Gastrocnemius medialis (tissue), 4 donors: ENCODE measurements at regions of chr16 and their contacts with region 1.

Region 1: DNA sequence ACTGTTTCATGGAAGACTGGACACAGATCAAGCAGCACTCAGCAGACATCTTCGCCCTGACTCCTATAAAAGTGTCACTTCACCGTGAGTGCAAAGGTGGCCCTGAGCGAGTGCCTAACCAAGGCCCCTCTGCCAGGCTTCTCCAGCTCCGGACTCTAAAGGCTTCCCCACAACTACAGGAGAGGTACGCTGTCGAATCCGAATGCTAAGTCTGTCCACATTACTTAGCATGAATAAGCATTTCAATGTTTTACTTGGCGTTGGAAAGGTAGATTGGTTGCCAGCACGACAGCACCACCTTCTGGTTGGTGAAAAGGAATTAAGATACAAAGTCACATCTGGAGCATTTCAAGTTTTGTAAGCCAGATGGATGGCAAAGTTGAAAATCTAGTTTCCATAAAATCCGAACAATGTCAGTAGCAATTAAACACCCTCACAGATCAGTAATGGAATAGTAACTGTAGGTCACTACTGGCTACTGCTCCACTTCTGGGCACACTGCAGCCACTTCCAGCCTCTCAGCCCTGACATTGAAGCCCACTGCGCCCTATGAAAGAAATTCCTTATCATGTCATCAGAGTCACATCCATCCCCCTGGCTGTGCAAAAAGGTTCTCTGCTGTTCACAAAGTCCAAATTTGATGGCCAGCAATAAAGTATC is 100.9 kb downstream of the PARN start:
- DNase-seq: peak; percentile 72 to 83
- ATAC-seq: peak; percentile 90 to 91
- H3K4me3 ChIP-seq: peak overlapping the region; percentile 26 to 49 (median 40)
- H3K27ac ChIP-seq: peak overlapping the region; percentile 82 to 92 (median 86)
- H3K4me1 ChIP-seq: peaks cover 23 to 44% of the 10 kb centered on the region in 2 donors
- H3K27me3 ChIP-seq: no peaks in the 10 kb centered on the region
- CTCF ChIP-seq: peak; percentile 74 to 88 (median 80)
- POLR2A ChIP-seq: peak; percentile 52 to 70

Region 2: GRCh38 chr16:13935408-13935807 is 593.7 kb before region 1 on chr16:
- in situ Hi-C with region 1: loop called in 3 of 4 experiments (anchors 25 kb)
- intact Hi-C with region 1: no loop called
- DNase-seq: no peak
- ATAC-seq: no peak
- H3K4me3 ChIP-seq: no peak overlapping the region
- H3K27ac ChIP-seq: no peak overlapping the region
- H3K4me1 ChIP-seq: peaks cover 34 to 40% of the 10 kb centered on the region in 2 donors
- H3K27me3 ChIP-seq: no peaks in the 10 kb centered on the region
- CTCF ChIP-seq: peak in 3 of 5 experiments; percentile 7 to 42 (median 15)
- POLR2A ChIP-seq: no peak

Region 3: DNA sequence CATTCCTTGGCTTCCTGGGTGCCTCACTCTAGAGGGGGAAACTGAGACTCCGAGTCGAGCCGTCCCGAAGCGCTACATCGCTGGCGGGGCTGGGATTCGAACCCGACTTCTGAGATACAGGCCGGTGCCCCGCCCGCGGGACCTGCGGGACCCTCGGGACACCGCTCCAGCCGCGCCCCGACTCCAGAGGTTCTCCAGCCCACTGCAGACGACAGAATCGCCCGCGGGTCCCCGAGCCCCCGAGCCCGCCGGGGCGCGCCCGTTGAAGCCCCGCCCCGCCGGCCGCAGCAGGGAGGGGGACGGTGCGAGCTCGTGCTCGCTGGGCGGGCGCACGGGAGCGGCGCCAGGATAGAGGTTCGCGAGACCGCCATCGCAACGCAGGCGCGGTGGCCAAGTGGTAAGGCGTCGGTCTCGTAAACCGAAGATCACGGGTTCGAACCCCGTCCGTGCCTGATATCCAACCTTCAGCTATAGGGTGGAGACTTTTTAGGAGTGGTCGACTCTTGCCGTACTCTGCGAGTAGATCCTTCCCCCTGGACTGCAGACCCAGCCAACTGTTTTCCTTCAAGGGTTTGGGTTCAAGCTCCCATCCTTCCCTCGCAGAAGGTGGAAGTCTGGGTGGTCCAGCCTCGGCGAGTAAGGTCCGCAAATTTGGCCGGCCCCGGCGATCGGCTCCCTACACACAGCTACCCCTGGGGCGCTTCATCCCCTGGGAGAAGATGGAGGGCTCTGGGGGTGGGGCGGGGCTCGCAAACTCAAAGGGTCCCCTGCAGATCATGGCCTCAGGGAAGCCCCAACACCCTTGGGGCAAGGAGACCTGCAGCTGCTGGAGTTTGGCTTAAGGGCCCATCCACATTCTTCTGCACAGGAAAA is 243.4 kb before region 1 on chr16:
- in situ Hi-C with region 1: loop called in 2 of 4 experiments (anchors 10 kb)
- intact Hi-C with region 1: no loop called
- DNase-seq: peak; percentile 74 to 87
- ATAC-seq: peak; percentile 80 to 82
- H3K4me3 ChIP-seq: peak overlapping the region; percentile 65 to 91 (median 83)
- H3K27ac ChIP-seq: peak overlapping the region; percentile 84 to 96 (median 94)
- H3K4me1 ChIP-seq: peaks cover 4 to 6% of the 10 kb centered on the region in 2 donors
- H3K27me3 ChIP-seq: no peaks in the 10 kb centered on the region
- CTCF ChIP-seq: no peak
- POLR2A ChIP-seq: peak; percentile 69 to 83

Region 4: DNA sequence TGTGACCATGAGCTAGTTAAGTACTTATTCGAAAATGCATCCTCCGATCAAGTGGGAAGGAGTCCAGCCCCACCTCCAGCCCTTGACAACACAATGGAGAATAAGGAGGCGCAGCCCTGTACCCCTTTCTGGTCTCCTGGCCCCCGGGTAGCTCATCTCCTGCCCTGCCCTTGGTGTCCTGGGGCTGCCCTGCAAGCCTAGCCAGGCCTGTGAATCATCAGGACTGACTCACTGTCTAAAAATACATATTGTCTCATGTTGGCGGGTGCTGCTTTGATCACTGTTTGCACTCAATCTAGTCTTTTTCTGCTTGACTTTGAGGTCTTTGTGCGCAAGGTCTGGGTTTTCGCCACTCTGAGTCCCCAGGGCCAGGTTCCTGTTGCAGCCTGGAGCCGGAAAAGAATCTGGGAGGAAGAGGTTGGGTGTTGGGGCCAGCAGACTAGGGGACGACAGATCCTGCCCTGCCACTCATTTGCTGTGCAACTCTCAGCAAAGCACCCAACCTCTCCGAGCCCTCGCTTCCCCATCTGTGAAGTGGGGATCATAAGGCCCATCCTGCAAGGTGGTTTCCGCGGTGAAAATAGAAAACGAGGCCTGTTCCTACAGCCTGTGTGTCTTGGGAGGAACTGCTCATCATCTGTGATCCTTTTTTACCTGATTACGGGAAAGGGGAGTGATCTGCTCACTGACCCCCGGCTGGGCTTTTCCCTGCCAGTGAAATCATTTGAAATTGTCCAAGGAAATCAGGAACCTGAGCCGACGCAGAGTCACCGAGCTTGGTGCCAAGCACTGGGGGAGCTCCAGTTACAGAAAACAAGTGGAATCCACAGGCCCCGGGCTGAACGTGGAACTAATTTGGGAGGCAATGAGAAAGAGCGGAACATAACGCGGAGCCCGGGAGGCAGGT is 129.5 kb before region 1 on chr16:
- in situ Hi-C with region 1: no loop called
- intact Hi-C with region 1: loop called (anchors 2 kb)
- DNase-seq: peak; percentile 83 to 89
- ATAC-seq: peak; percentile 87 to 88
- H3K4me3 ChIP-seq: peak overlapping the region; percentile 17 to 32 (median 22)
- H3K27ac ChIP-seq: peak overlapping the region; percentile 91 to 96 (median 94)
- H3K4me1 ChIP-seq: peaks cover 21 to 25% of the 10 kb centered on the region in 2 donors
- H3K27me3 ChIP-seq: no peaks in the 10 kb centered on the region
- CTCF ChIP-seq: no peak
- POLR2A ChIP-seq: no peak

Region 5: GRCh38 chr16:14486520-14487303 is 42.4 kb before region 1 on chr16:
- in situ Hi-C with region 1: no loop called
- intact Hi-C with region 1: loop called (anchors 2 kb)
- DNase-seq: peak; percentile 77 to 80
- ATAC-seq: peak; percentile 81
- H3K4me3 ChIP-seq: peak overlapping the region; percentile 49 to 59 (median 54)
- H3K27ac ChIP-seq: peak overlapping the region; percentile 81 to 92 (median 86)
- H3K4me1 ChIP-seq: peaks cover 34 to 47% of the 10 kb centered on the region in 2 donors
- H3K27me3 ChIP-seq: no peaks in the 10 kb centered on the region
- CTCF ChIP-seq: peak in 3 of 5 experiments; percentile 6 to 21 (median 6)
- POLR2A ChIP-seq: peak; percentile 13 to 39

Region 6: DNA sequence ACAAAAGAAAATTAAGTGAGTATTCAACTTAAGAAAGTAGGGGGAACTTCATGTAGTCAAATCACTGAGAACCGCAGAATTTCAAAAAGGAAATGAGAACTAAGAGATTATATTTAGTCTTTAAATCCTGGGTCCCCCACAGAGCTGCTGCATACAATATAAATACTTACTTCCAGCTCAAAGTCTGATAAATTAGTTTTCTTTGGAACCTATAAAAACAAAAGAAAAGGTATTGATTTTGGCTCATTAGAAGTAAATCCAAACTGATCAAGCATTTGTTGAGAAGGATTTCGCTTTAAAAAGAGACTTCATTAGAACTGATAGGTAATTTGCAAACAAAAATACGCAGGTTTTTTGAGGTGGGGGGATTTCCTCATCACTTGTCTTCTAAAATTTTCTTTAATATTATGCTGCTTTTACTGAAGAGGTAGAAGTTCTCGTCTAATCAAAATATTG is 79.0 kb after region 1 on chr16:
- in situ Hi-C with region 1: no loop called
- intact Hi-C with region 1: no loop called
- DNase-seq: no peak
- ATAC-seq: no peak
- H3K4me3 ChIP-seq: no peak overlapping the region
- H3K27ac ChIP-seq: no peak overlapping the region
- H3K4me1 ChIP-seq: no peaks in the 10 kb centered on the region
- H3K27me3 ChIP-seq: no peaks in the 10 kb centered on the region
- CTCF ChIP-seq: no peak
- POLR2A ChIP-seq: no peak